ENCODE measurements at regions of chr4 and their contacts with region 1.

Region 1: GRCh38 chr4:123418351-123418931 is 21.8 kb downstream of the SPRY1 start:
- DNase-seq: no peak
- ATAC-seq: peak; percentile 42
- H3K4me3 Mint-ChIP-seq: peak overlapping the region; percentile 15
- H3K27ac Mint-ChIP-seq: no peak overlapping the region
- H3K4me1 Mint-ChIP-seq: peaks cover 34% of the 10 kb centered on the region
- H3K27me3 Mint-ChIP-seq: peaks cover 2% of the 10 kb centered on the region
- CTCF ChIP-seq: no peak

Region 2: GRCh38 chr4:123452616-123453015 is 34.2 kb after region 1 on chr4:
- CTCF ChIA-PET with region 1: no interaction called
- POLR2A ChIA-PET with region 1: interaction called, 3 read pairs
- intact Hi-C with region 1: loop called (anchors 2 kb)
- DNase-seq: no peak
- ATAC-seq: no peak
- H3K4me3 Mint-ChIP-seq: no peak overlapping the region
- H3K27ac Mint-ChIP-seq: no peak overlapping the region
- H3K4me1 Mint-ChIP-seq: peaks cover 51% of the 10 kb centered on the region
- H3K27me3 Mint-ChIP-seq: no peaks in the 10 kb centered on the region
- CTCF ChIP-seq: no peak

Measured in activated B cell treated with CpG ODN at 0.5 μM for 24 hours (primary cell).